Activated CD4-positive, alpha-beta T cell treated with anti-CD3 and anti-CD28 coated beads, Interleukin-2, amount 10 ng/mL, durations not matched to agents 7 days and 5 days (primary cell): ENCODE measurements at regions of chr17 and their contacts with region 1.

Region 1: GRCh38 chr17:48636177-48637018 is 10.2 kb upstream of the HOXB9 start:
- DNase-seq: peak; percentile 71
- H3K4me3 Mint-ChIP-seq: no peak overlapping the region
- H3K27ac Mint-ChIP-seq: no peak overlapping the region
- H3K4me1 Mint-ChIP-seq: peaks cover 10% of the 10 kb centered on the region
- H3K27me3 Mint-ChIP-seq: peaks cover 91% of the 10 kb centered on the region

Region 2: GRCh38 chr17:48625495-48626244 is 10.7 kb before region 1 on chr17:
- CTCF ChIA-PET with region 1: interaction called, 16 read pairs
- POLR2A ChIA-PET with region 1: no interaction called
- DNase-seq: peak; percentile 30
- H3K4me3 Mint-ChIP-seq: peak overlapping the region; percentile 62
- H3K27ac Mint-ChIP-seq: peak overlapping the region; percentile 54
- H3K4me1 Mint-ChIP-seq: peaks cover 13% of the 10 kb centered on the region
- H3K27me3 Mint-ChIP-seq: peaks cover 87% of the 10 kb centered on the region